ENCODE measurements at regions of chr1 and their contacts with region 1.

Region 1: GRCh38 chr1:47179017-47179987 is 10.5 kb downstream of the PDZK1IP1 start:
- DNase-seq: peak; percentile 65 to 84
- ATAC-seq: peak; percentile 83 to 92
- H3K4me3 ChIP-seq: peak overlapping the region; percentile 35 to 64 (median 50)
- H3K27ac ChIP-seq: peak overlapping the region in 2 of 4 donors; percentile 16 to 32
- H3K4me1 ChIP-seq: peaks cover 9 to 13% of the 10 kb centered on the region in 2 donors
- H3K27me3 ChIP-seq: peaks cover 0 to 9% (median 5%) of the 10 kb centered on the region in 3 donors
- CTCF ChIP-seq: peak; percentile 79 to 94 (median 88)
- POLR2A ChIP-seq: no peak

Region 2: DNA sequence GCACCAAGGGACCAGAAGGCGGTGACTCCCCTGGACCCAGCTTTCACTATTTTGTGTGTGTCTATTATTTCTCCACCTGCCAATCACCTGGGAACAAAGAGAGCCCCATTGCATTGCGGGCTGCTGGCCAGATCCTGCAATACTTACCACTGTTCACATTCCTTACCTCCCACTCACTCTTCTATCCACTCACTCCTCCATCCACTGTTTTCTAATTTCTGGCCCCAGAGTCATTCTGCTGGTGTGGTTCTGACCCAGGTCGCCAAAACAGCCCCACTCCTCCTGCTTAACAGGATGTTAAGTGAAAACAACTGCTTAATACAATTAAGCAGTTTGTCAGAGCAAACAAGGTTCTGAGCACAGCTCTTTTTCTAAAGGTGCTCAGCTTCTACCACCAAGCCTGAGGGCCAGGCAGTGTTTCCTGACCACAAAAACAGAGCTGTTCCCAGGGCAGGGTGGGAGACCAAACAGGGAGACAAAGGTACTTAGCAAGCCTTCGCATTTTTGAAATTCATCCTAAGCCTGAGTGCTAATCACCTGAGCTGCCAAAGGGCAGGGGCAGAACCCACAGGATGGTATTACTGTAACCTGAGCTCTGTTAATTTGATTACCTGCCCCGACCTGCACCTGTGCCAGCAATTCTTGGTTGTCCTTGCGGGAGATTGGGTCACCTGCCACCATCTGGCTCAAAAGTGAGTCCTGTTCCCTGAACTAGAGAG is 421.9 kb before region 1 on chr1:
- in situ Hi-C with region 1: no loop called
- intact Hi-C with region 1: no loop called
- DNase-seq: no peak
- ATAC-seq: no peak
- H3K4me3 ChIP-seq: no peak overlapping the region
- H3K27ac ChIP-seq: no peak overlapping the region
- H3K4me1 ChIP-seq: no peaks in the 10 kb centered on the region
- H3K27me3 ChIP-seq: no peaks in the 10 kb centered on the region
- CTCF ChIP-seq: no peak
- POLR2A ChIP-seq: no peak

Region 3: DNA sequence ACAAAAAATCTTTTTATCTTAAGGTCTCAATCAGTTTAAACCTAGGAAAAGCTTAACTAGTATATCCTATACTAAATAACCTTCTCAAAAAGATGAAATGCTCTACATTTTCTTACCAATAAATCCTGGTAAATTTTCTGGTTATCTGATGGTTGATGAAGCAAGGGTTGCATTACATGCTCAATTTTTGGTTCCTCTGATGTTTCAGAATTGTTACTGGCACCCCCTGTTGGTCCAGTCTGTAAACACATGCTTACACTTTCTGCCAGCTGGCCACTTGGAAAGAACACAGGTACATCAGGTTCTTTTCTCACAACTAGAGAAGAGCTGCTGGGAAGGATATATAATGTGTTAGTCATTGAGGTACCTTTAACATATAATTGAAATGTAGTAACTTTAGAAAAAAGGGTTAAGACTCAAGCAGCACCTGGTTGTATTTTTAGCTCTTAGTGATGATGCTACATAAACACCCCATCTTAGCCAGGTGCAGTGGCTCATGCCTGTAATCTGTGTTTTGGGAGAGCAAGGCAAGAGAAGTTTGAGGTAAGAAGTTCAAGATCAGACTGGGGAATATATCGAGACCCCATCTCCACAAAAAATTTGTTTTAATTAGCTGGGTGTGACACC is 83.6 kb after region 1 on chr1:
- in situ Hi-C with region 1: no loop called
- intact Hi-C with region 1: loop called (anchors 1 kb)
- DNase-seq: peak; percentile 12 to 66
- ATAC-seq: peak; percentile 72
- H3K4me3 ChIP-seq: no peak overlapping the region
- H3K27ac ChIP-seq: peak overlapping the region in 2 of 4 donors; percentile 43 to 70
- H3K4me1 ChIP-seq: peaks cover 0 to 22% of the 10 kb centered on the region in 2 donors
- H3K27me3 ChIP-seq: no peaks in the 10 kb centered on the region
- CTCF ChIP-seq: peak; percentile 29 to 75 (median 53)
- POLR2A ChIP-seq: no peak

Region 4: DNA sequence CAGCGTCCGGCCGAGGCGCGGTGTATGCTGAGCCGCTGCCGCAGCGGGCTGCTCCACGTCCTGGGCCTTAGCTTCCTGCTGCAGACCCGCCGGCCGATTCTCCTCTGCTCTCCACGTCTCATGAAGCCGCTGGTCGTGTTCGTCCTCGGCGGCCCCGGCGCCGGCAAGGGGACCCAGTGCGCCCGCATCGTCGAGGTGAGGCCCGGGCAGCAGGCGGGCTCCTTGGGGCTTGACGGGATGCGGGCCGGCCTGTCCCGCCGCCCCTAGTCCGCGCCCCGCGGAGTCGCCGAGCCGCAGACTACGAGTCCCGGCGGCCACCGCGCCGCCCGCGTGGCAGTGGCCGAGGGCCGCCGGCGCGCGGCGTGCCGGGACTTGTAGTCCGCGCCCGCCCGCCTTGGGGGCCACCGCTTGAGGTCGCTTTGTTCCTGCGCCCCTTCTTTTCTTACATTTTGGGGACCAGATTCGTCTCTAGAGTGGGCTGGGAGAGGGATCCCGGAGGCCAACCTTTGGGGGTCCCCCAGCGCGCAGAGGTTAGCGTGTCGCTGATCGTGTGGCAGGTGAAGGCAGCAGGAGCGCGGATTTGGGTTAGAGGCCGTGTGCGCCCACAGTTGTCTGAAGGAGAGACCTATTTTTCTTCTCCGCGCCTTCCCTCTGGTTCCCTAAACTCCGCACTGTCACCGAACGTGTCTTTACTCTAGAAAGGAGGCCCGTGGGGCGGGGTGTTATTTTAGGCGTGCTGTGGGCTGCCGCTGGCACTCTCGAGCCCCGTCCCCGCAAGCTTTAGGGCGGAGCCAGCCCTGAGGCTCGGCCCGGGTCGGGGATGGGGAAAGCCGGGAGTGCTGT is 154.8 kb after region 1 on chr1:
- in situ Hi-C with region 1: loop called in 2 of 4 experiments (anchors 25 kb)
- intact Hi-C with region 1: loop called (anchors 5 kb)
- DNase-seq: peak; percentile 65 to 83
- ATAC-seq: peak; percentile 90 to 92
- H3K4me3 ChIP-seq: peak overlapping the region; percentile 72 to 99 (median 92)
- H3K27ac ChIP-seq: peak overlapping the region; percentile 93 to 100 (median 98)
- H3K4me1 ChIP-seq: peaks cover 28 to 39% of the 10 kb centered on the region in 2 donors
- H3K27me3 ChIP-seq: no peaks in the 10 kb centered on the region
- CTCF ChIP-seq: peak in 2 of 5 experiments; percentile 40 to 46
- POLR2A ChIP-seq: peak; percentile 73 to 76

Region 5: DNA sequence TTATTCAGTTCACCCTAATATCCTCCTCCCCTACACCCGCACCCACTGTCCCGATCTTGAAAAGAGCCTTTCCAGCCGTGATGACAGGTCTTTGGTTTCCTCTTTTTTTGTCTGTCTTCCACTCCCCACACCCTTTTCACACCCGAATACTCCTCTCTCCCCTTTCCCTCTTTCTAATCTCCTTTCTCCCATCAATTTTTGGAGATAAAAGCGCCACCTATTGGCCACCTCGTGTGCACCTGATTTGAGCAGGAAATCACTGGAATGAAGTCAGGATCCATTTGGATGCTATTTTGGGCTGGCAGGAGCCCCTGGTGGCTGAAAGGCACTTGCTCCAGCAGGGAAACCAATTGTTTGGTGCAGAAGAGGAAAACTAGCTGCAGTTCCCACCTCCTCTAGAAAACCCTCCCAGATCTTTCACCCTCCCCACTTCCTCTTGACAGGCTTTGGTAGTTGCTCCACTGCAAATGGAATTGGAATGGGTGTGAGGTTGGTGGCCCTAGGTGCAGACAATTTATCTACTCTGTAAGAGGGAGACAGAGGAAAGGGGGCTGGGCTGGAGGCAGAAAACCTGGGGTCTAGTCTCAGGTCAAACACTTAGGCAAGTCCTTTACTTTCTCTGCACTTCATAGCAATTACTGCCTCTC is 245.2 kb after region 1 on chr1:
- in situ Hi-C with region 1: loop called in 2 of 4 experiments (anchors 25 kb)
- intact Hi-C with region 1: loop called (anchors 5 kb)
- DNase-seq: no peak
- ATAC-seq: no peak
- H3K4me3 ChIP-seq: no peak overlapping the region
- H3K27ac ChIP-seq: no peak overlapping the region
- H3K4me1 ChIP-seq: no peaks in the 10 kb centered on the region
- H3K27me3 ChIP-seq: peaks cover 0 to 11% (median 11%) of the 10 kb centered on the region in 3 donors
- CTCF ChIP-seq: peak; percentile 21 to 60 (median 40)
- POLR2A ChIP-seq: no peak

Region 6: DNA sequence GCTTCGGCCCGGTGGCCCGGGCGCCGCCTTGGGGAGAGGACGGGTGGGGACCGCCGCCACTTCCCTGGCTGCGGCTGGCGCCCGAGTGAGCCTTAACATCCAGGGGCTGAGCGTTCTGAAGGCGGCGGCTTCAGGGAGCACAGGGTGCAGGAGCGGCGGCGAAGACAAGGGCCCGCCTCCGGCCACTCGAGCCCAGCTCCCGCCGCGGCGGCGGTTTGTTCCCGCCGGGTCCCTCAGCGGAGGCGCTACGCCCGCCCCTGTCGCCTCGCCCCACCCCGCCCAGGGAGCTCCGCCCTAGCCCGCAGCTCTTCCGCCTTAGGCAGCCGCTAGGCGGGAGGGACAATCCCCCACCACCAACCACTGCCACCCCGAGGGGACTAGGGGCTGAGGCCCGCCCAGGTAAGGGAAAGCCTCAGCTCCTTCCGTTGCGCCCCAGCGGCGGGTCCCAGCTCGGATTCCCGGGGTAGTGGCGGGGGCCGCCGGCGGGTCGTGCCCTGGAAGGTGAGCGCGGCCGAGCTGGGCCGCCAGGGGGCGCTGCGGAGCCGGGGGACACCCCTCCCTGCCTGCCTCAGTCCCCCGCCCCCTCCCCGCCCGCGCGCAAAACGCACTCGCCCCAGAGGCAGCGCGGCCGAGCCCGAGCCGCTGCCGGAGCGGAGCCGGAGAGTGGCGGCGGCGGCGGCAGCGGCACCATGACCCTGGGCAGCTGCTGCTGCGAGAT is 258.3 kb after region 1 on chr1 and contains the start of gene FOXD2:
- in situ Hi-C with region 1: loop called in 1 of 4 experiments (anchors 25 kb)
- intact Hi-C with region 1: no loop called
- DNase-seq: peak; percentile 57 to 66
- ATAC-seq: peak; percentile 89 to 93
- H3K4me3 ChIP-seq: peak within 1 kb of the TSS; percentile 71 to 95 (median 74)
- H3K27ac ChIP-seq: peak within 1 kb of the TSS; percentile 69 to 78 (median 72)
- H3K4me1 ChIP-seq: peaks cover 8 to 17% of the 10 kb centered on the region in 2 donors
- H3K27me3 ChIP-seq: peaks cover 59 to 81% (median 78%) of the 10 kb centered on the region in 3 donors
- CTCF ChIP-seq: peak; percentile 83 to 99 (median 97)
- POLR2A ChIP-seq: peak; percentile 48 to 52
- total RNA-seq, gene FOXD2: 0.11 TPM in 1 of 4 donors, not detected in the others

Measured in gastrocnemius medialis (tissue), 4 donors.